Activated naive CD4-positive, alpha-beta T cell treated with anti-CD3 and anti-CD28 coated beads for 36 hours (primary cell): ENCODE measurements at regions of chr10 and their contacts with region 1.

Region 1: GRCh38 chr10:69123747-69124562 is at the start of gene VPS26A:
- DNase-seq: peak; percentile 99
- H3K4me3 Mint-ChIP-seq: peak within 1 kb of the TSS; percentile 95
- H3K27ac Mint-ChIP-seq: peak within 1 kb of the TSS; percentile 93
- H3K4me1 Mint-ChIP-seq: peaks cover 38% of the 10 kb centered on the region
- H3K27me3 Mint-ChIP-seq: no peaks in the 10 kb centered on the region
- total RNA-seq, gene VPS26A: 26.2 to 27.9 TPM

Region 2: DNA sequence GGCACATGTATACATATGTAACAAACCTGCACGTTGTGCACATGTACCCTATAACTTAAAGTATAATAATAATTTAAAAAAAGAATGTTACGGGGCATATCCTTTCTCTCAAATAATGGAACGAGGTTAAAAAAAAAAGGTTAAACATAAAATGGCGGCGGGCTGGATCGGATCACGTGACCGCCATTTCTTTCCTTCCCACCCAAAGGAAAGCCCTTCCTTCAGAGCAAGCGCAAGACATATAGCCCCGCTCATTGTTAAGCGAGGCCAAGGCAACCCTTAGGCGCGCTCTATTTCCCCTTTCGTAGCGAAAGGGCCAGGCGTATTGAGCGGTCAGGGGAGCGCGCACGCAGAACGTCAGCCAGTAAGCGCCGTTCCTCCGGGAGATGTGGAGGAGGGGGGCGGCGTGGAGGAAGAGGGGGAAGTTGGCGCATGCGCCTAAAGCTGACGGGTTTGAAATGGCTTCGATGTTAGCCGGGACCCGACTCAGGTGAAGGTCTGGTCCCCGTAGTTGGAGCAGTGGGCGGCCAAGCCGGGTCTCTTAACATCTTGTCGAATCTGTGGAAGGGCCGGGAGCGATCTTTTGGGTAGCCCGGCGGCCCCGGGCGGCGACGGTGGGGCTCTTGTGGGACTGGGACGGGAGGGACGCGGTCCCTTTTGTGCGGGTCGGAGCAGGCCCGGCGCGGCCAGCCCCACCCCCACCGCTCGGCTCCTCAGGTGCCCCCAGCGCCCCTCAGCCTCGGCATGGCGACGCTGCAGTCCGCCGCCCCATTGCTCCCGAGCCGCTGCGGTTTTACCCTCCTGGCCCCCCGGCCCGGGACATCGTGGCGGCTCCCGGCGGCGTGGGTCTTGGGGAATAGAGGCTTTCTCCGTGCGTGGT is 402.9 kb before region 1 on chr10 and contains the start of gene CCAR1:
- CTCF ChIA-PET with region 1: no interaction called
- intact Hi-C with region 1: loop called (anchors 10 kb)
- DNase-seq: peak; percentile 98
- H3K4me3 Mint-ChIP-seq: peak within 1 kb of the TSS; percentile 96
- H3K27ac Mint-ChIP-seq: peak within 1 kb of the TSS; percentile 96
- H3K4me1 Mint-ChIP-seq: peaks cover 16% of the 10 kb centered on the region
- H3K27me3 Mint-ChIP-seq: no peaks in the 10 kb centered on the region
- total RNA-seq, gene CCAR1: 80.7 to 87.9 TPM

Region 3: DNA sequence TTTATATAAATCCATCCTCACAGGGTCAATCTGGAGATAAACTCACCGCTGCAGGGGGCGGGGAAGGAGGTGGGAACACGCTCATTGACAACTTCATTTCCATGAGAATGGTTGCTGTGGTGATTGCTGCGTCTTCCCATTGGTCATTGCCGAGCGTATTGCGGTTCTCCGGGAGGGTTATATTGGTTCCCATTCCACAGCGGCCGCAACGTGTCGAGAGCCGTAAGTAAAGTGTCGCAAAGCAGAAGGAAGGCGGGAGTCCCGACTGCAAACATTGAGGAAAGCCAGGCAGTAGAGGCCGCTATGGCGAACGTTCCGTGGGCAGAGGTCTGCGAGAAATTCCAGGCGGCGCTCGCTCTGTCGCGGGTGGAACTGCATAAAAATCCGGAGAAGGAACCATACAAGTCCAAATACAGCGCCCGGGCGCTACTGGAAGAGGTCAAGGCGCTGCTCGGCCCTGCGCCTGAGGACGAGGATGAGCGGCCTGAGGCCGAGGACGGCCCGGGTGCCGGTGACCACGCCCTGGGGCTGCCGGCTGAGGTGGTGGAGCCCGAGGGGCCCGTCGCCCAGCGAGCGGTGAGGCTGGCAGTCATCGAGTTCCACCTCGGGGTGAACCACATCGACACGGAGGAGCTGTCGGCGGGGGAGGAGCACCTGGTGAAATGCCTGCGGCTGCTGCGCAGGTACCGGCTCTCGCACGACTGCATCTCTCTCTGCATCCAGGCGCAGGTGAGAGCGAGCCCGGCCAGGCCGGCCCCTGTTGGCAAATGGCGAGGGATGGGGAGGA is 135.2 kb before region 1 on chr10 and contains the start of gene KIFBP:
- CTCF ChIA-PET with region 1: interaction called, 3 read pairs
- intact Hi-C with region 1: loop called (anchors 1 kb)
- DNase-seq: peak; percentile 94
- H3K4me3 Mint-ChIP-seq: peak within 1 kb of the TSS; percentile 98
- H3K27ac Mint-ChIP-seq: peak within 1 kb of the TSS; percentile 92
- H3K4me1 Mint-ChIP-seq: peaks cover 44% of the 10 kb centered on the region
- H3K27me3 Mint-ChIP-seq: no peaks in the 10 kb centered on the region
- total RNA-seq, gene KIFBP: 10.1 to 10.6 TPM

Region 4: DNA sequence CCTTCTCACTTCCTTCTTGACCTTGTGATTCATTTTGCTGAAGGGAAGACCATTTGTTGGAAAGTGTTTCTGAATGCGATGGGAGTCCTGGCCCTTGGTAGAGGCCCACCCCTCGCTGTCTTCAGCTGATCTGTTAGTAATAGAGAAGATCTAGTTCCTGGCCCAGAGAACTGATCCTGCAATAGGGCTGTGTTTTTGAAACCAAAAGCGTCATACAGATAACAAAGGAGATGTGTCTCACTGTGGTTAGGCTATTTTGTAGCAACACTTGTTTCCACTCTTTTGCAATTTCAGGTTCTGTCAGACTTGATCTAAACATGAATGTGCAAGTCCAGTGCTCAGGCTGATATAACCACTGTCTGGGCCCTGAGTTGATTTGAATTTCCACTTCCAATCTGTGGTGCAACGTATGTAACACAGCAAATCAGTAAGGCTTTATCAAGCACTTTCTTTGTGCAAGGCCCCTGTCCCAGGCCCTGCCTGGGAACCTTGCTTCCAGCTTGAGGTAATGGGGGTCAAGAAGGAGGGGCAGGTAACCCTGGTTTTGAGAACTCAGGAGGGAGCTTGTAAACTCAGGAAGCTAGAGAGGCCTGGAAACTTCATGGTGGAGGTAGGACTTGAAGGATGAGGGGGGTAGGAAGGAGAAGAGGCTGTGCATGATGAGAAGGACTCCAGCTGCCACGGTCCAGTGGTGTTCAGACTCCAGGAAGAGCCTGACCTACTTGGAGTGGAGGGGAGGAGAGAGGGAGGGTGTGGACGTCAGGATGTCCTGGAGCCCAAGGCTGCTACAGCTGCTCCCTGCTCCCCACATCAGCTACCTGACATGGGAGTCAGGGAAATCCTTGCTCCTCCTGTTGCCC is 78.3 kb before region 1 on chr10:
- CTCF ChIA-PET with region 1: no interaction called
- intact Hi-C with region 1: loop called (anchors 2 kb)
- DNase-seq: peak; percentile 60
- H3K4me3 Mint-ChIP-seq: no peak overlapping the region
- H3K27ac Mint-ChIP-seq: peak overlapping the region; percentile 87
- H3K4me1 Mint-ChIP-seq: peaks cover 29% of the 10 kb centered on the region
- H3K27me3 Mint-ChIP-seq: no peaks in the 10 kb centered on the region

Region 5: DNA sequence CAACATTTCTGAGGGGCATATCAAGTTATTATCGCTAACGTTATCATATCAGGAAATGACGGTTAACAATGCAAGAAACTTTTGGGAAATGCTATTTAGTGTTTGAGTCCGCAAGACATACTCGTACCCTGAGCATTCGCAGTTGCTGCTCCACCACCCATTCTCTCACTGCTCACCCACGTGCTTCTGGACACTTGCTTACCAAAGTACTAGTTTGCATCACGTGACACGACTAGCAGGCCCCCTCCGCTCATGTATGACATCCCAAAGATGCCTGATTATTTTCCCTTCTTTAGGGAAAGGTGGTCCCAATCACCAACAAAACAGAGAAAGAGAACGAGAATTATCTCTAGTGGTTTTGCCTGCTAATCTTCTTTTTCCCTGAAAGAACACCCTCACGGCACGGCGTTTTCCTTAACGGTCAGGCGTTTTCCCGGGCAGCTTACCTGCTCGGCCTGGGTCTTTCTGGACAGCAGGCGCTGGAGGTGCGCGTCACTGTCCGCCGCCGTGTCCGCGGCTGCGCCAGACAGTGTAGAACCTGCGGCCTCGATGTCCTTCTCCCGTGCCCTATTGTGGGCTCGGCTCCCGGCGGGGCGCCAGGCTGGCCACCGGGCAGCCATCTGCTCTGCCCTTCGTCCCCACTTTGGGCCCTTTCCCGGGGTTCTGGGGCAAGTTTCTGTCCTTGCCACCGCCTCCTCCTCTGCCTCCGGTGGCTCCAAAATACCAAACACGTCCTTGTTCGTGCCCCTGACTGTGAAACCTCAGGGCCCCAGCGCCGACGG is 56.0 kb after region 1 on chr10 and contains the start of gene SUPV3L1:
- CTCF ChIA-PET with region 1: no interaction called
- intact Hi-C with region 1: loop called (anchors 1 kb)
- DNase-seq: peak; percentile 92
- H3K4me3 Mint-ChIP-seq: peak within 1 kb of the TSS; percentile 92
- H3K27ac Mint-ChIP-seq: peak within 1 kb of the TSS; percentile 98
- H3K4me1 Mint-ChIP-seq: peaks cover 32% of the 10 kb centered on the region
- H3K27me3 Mint-ChIP-seq: no peaks in the 10 kb centered on the region
- total RNA-seq, gene SUPV3L1: 38.4 to 41.1 TPM

Region 6: DNA sequence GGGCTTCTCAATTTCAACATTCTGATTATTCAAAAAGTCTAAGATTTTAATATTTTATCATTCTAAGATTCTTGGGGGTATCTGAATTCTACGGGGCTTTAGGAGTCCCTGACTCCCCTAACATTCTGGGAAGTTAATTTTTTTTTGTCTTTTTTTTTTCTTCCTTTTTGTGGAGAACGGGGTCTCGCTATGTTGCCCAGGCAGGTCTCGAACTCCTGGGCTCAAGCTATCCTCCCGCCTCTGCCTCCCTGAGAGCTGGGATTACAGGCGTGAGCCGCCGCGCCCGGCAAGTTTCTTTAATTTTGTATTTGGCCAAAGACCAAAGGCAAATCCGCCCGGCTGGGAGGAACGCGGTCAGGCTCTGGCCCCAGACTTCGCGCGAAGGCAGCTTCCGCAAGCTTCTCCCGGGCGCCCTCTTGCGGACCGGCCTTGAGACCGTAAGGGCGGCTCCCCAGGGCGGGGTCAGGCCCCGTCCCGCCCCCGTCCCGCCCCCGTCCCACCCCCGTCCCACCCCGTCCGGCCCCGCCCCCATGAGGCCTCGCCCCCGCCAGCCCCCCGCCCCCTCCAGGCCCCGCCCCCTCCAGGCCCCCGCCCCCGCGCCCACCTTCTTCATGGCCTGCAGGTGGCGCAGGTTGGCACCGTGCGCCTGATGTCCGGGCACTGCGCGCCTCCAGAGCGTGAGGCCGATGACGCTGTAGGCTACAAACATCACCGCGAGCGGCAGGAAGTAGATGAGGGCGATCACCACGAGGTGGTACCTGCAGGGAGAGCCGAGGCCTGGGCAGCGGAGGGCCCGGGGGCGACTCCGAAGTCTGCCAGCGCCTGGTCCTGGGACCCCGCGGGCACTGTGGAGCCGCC is 284.6 kb after region 1 on chr10:
- CTCF ChIA-PET with region 1: no interaction called
- intact Hi-C with region 1: loop called (anchors 2 kb)
- DNase-seq: peak; percentile 93
- H3K4me3 Mint-ChIP-seq: peak overlapping the region; percentile 58
- H3K27ac Mint-ChIP-seq: no peak overlapping the region
- H3K4me1 Mint-ChIP-seq: peaks cover 12% of the 10 kb centered on the region
- H3K27me3 Mint-ChIP-seq: no peaks in the 10 kb centered on the region